ENCODE measurements at regions of chr18 and their contacts with region 1.

Region 1: DNA sequence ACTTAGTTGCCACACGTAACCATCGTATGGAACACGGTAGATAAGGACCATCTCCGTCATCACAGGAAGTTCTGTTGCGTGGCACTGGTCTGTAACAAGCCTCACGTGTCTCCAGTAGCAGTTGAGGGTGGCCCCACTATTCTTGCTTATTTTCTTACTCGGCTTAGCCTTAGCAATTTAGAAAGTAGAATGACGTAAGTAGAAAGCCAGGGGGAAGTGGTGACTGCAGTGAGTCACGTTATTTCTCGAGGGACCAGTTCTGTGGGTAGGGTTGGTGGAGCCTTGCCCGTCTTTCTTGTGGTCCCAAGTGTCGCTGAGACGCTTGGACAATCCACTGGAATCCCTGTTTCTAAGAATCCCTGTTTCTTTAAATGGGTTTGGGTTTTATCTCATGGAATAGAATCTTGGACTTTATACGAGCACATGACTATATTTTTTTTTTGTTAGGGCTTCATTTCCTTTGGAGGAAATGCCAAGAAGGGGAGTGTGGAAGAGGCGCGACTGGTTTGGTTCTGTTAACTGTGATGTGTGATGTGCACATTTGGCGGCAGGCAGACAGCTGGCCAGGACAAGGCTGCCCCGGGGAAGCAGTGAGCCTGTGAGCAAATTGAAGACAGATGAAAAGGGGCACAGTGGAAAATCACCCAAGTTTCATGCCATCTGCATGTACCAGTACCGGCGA is 96.2 kb downstream of the CABLES1 start:
- DNase-seq: peak; percentile 64 to 91
- ATAC-seq: peak; percentile 83 to 94 (median 89)
- H3K4me3 ChIP-seq: no peak overlapping the region
- H3K4me3 Mint-ChIP-seq: peak overlapping the region; percentile 86
- H3K27ac ChIP-seq: peak overlapping the region; percentile 82
- H3K27ac Mint-ChIP-seq: peak overlapping the region; percentile 95 to 96
- H3K4me1 ChIP-seq: peaks cover 31% of the 10 kb centered on the region
- H3K4me1 Mint-ChIP-seq: peaks cover 24 to 31% of the 10 kb centered on the region in 2 donors
- H3K27me3 ChIP-seq: no peaks in the 10 kb centered on the region
- H3K27me3 Mint-ChIP-seq: no peaks in the 10 kb centered on the region
- CTCF ChIP-seq: no peak

Region 2: DNA sequence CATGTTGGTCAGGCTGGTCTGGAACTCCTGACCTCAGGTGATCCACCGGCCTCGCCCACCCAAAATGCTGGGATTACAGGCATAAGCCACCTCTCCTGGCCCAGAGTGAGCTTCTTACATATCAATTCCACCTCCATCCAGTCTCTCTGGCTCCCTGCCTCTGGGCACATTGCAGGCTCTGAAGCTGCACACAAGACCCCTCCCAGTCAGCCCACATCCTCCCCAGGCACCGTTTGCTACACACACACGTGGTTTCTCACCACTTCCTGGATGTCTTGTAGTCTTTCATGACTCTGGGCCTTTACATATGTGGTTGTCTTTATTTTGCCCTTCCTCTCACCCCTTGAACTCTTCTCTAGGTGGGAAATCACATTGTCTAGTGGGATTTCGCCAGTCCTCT is 160.2 kb before region 1 on chr18:
- intact Hi-C with region 1: loop called (anchors 1 kb)
- DNase-seq: peak; percentile 81 to 94
- ATAC-seq: peak; percentile 90 to 96 (median 96)
- H3K4me3 ChIP-seq: no peak overlapping the region
- H3K4me3 Mint-ChIP-seq: peak overlapping the region; percentile 89
- H3K27ac ChIP-seq: peak overlapping the region; percentile 63
- H3K27ac Mint-ChIP-seq: peak overlapping the region; percentile 84 to 86
- H3K4me1 ChIP-seq: peaks cover 59% of the 10 kb centered on the region
- H3K4me1 Mint-ChIP-seq: peaks cover 52 to 56% of the 10 kb centered on the region in 2 donors
- H3K27me3 ChIP-seq: no peaks in the 10 kb centered on the region
- H3K27me3 Mint-ChIP-seq: no peaks in the 10 kb centered on the region
- CTCF ChIP-seq: no peak

Region 3: GRCh38 chr18:23183411-23184155 is 47.9 kb before region 1 on chr18:
- intact Hi-C with region 1: loop called (anchors 5 kb)
- DNase-seq: no peak
- ATAC-seq: no peak
- H3K4me3 ChIP-seq: no peak overlapping the region
- H3K4me3 Mint-ChIP-seq: no peak overlapping the region
- H3K27ac ChIP-seq: no peak overlapping the region
- H3K27ac Mint-ChIP-seq: peak overlapping the region in 1 of 2 donors; percentile 14
- H3K4me1 ChIP-seq: peaks cover 2% of the 10 kb centered on the region
- H3K4me1 Mint-ChIP-seq: peaks cover 7 to 13% of the 10 kb centered on the region in 2 donors
- H3K27me3 ChIP-seq: no peaks in the 10 kb centered on the region
- H3K27me3 Mint-ChIP-seq: peaks cover 0 to 2% of the 10 kb centered on the region in 2 donors
- CTCF ChIP-seq: no peak

Region 4: GRCh38 chr18:23266717-23267446 is 35.4 kb after region 1 on chr18:
- intact Hi-C with region 1: loop called (anchors 2 kb)
- DNase-seq: peak; percentile 9 to 33
- ATAC-seq: peak; percentile 48 to 73 (median 61)
- H3K4me3 ChIP-seq: no peak overlapping the region
- H3K4me3 Mint-ChIP-seq: peak overlapping the region; percentile 32
- H3K27ac ChIP-seq: peak overlapping the region; percentile 59
- H3K27ac Mint-ChIP-seq: peak overlapping the region; percentile 56 to 82
- H3K4me1 ChIP-seq: peaks cover 34% of the 10 kb centered on the region
- H3K4me1 Mint-ChIP-seq: peaks cover 31 to 32% of the 10 kb centered on the region in 2 donors
- H3K27me3 ChIP-seq: no peaks in the 10 kb centered on the region
- H3K27me3 Mint-ChIP-seq: peaks cover 0 to 3% of the 10 kb centered on the region in 2 donors
- CTCF ChIP-seq: no peak

Region 5: GRCh38 chr18:23357996-23358594 is 126.6 kb after region 1 on chr18:
- intact Hi-C with region 1: loop called (anchors 2 kb)
- DNase-seq: no peak
- ATAC-seq: peak in 1 of 3 donors; percentile 3
- H3K4me3 ChIP-seq: no peak overlapping the region
- H3K4me3 Mint-ChIP-seq: peak overlapping the region; percentile 76
- H3K27ac ChIP-seq: peak overlapping the region; percentile 30
- H3K27ac Mint-ChIP-seq: peak overlapping the region; percentile 75 to 85
- H3K4me1 ChIP-seq: peaks cover 26% of the 10 kb centered on the region
- H3K4me1 Mint-ChIP-seq: peaks cover 34 to 46% of the 10 kb centered on the region in 2 donors
- H3K27me3 ChIP-seq: no peaks in the 10 kb centered on the region
- H3K27me3 Mint-ChIP-seq: no peaks in the 10 kb centered on the region
- CTCF ChIP-seq: no peak

Region 6: DNA sequence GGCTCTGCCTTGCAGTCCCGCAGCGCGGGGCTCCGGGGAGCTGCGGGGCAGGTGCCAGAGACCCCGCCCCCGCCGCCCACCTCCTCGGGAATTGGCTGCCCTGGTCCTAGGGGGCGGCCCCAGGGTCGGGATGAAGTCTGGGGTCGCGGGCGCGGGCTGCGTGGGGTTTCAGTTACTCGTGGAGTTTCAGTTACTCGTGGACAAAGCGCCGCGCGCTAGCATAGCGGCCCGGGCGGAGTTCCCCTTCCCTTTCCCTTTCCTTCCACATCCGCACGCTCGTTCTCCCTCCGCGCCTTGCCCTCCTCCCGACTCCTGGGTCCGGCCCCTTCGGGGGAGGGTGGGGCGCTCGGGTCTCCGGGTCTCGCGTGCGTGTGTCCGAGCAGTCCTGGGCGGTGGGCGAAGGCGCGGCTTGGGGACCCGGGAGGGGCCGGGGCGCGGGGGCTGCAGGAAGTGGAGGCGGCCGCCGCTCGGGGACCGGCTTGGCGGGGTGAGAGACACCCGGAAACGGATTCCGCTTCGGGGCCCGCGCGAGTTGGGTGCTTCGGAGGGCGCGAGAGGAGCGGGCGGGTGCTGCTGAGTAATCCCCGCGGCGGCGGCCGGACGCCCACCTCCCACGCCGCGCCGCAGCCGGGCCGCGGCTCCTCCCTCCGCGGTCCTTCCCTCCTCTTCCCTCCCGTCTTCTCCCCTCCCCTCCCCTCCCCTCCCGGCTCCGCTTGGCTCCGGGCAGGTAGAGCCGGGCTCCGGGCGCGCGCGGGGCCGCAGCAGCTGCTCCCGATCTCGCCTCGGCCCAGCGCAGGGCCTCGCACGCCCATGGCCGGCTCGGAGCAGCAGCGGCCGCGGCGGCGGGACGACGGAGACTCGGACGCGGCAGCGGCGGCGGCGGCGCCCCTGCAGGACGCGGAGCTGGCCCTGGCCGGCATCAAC is 782.8 kb after region 1 on chr18 and contains the start of gene TTC39C:
- intact Hi-C with region 1: loop called (anchors 10 kb)
- DNase-seq: peak; percentile 76 to 88
- ATAC-seq: peak; percentile 75 to 84 (median 83)
- H3K4me3 ChIP-seq: peak within 1 kb of the TSS; percentile 72
- H3K4me3 Mint-ChIP-seq: peak within 1 kb of the TSS; percentile 99
- H3K27ac ChIP-seq: peak within 1 kb of the TSS; percentile 88
- H3K27ac Mint-ChIP-seq: peak within 1 kb of the TSS; percentile 92 to 93
- H3K4me1 ChIP-seq: peaks cover 68% of the 10 kb centered on the region
- H3K4me1 Mint-ChIP-seq: peaks cover 80 to 83% of the 10 kb centered on the region in 2 donors
- H3K27me3 ChIP-seq: no peaks in the 10 kb centered on the region
- H3K27me3 Mint-ChIP-seq: no peaks in the 10 kb centered on the region
- CTCF ChIP-seq: no peak
- total RNA-seq, gene TTC39C: 39.0 to 61.5 (median 44.3) TPM

Measured in natural killer cell (primary cell).